Activated B cell treated with CpG ODN at 0.5 μM for 24 hours (primary cell): ENCODE measurements at regions of chr12 and their contacts with region 1.

Region 1: DNA sequence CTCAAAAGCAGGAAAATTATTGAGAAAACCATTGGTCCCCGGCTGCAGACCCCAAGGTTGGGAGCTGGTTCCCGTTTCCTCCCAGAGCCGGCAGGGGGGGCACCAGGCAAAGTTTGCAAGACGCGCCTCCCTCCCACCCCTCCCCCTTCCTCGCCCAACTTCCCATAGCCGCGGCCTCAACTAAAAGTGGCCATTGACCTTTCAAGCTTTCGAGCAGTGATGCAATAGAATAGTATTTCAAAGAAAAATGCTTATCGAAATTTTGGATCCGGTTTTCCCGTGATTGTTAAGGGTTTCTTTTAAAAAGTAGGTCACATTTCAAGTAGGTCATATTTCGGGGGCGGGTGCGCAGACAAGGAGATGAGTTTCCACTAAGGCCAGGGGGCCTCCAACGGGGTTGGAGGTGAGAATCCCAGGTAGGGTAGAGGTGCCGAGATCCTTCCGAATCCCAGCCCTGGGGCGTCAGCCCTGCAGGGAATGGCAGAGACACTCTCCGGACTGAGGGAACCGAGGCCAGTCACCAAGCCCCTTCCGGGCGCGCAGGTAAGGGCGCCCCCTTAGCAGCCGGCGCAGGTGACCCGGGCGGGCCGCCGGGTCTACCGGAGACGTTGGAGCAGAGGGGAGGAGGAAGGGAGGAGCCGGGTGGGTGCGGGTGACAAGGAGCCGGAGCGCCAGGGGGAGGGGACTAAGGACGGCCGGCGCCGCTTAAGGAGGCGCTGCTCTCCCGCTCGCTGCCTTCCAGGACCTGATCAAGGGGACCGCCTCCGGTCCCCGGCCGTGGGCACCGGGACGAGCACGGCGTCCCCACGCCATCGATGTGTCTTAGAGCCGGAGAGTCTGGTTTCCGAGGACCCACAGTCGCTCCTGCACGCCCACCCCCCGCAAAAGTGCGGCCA is 2.6 kb upstream of the SOCS2 start:
- DNase-seq: peak; percentile 60
- ATAC-seq: peak; percentile 42
- H3K4me3 Mint-ChIP-seq: peak overlapping the region; percentile 88
- H3K27ac Mint-ChIP-seq: no peak overlapping the region
- H3K4me1 Mint-ChIP-seq: peaks cover 17% of the 10 kb centered on the region
- H3K27me3 Mint-ChIP-seq: peaks cover 26% of the 10 kb centered on the region
- CTCF ChIP-seq: no peak

Region 2: GRCh38 chr12:92784795-92785562 is 784.9 kb before region 1 on chr12:
- CTCF ChIA-PET with region 1: no interaction called
- POLR2A ChIA-PET with region 1: no interaction called
- intact Hi-C with region 1: loop called (anchors 5 kb)
- DNase-seq: no peak
- ATAC-seq: peak; percentile 98
- H3K4me3 Mint-ChIP-seq: no peak overlapping the region
- H3K27ac Mint-ChIP-seq: no peak overlapping the region
- H3K4me1 Mint-ChIP-seq: no peaks in the 10 kb centered on the region
- H3K27me3 Mint-ChIP-seq: no peaks in the 10 kb centered on the region
- CTCF ChIP-seq: no peak

Region 3: DNA sequence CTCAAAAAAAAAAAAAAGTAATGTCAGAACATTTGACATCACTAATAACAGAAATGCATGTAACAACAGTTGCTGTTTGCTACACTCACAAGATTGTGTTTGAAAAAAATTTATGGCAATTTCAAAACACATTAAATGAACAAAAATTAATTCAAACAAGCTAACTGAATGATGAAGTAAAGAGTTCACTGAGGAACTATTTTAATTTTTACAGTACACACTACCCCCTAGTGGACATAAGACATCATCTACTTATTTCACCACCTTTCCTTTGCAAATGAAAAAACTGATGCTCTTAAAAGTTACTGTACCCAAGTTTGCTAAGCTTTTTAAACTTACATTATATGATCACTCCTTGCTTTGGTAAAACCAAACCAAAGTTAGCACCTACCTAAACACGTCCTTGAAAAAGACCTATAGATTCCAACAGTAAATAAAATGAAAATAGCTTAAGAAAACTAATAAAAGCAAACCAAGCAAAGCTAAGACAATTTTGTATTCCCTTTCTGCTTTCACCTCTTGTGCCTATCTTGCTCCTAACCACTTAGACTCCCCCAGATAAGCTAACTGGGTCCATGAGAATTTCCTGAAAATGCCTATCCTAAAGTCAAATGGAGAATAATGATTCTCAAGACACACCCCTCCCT is 150.4 kb before region 1 on chr12:
- CTCF ChIA-PET with region 1: no interaction called
- POLR2A ChIA-PET with region 1: no interaction called
- intact Hi-C with region 1: loop called (anchors 5 kb)
- DNase-seq: no peak
- ATAC-seq: peak; percentile 56
- H3K4me3 Mint-ChIP-seq: no peak overlapping the region
- H3K27ac Mint-ChIP-seq: peak overlapping the region; percentile 31
- H3K4me1 Mint-ChIP-seq: peaks cover 87% of the 10 kb centered on the region
- H3K27me3 Mint-ChIP-seq: no peaks in the 10 kb centered on the region
- CTCF ChIP-seq: peak; percentile 68

Region 4: GRCh38 chr12:93502802-93503623 is 66.9 kb before region 1 on chr12:
- CTCF ChIA-PET with region 1: interaction called, 13 read pairs
- POLR2A ChIA-PET with region 1: interaction called, 13 read pairs
- intact Hi-C with region 1: loop called (anchors 1 kb)
- DNase-seq: no peak
- ATAC-seq: no peak
- H3K4me3 Mint-ChIP-seq: no peak overlapping the region
- H3K27ac Mint-ChIP-seq: no peak overlapping the region
- H3K4me1 Mint-ChIP-seq: no peaks in the 10 kb centered on the region
- H3K27me3 Mint-ChIP-seq: no peaks in the 10 kb centered on the region
- CTCF ChIP-seq: peak; percentile 78

Region 5: GRCh38 chr12:93550748-93551611 is 18.9 kb before region 1 on chr12:
- CTCF ChIA-PET with region 1: no interaction called
- POLR2A ChIA-PET with region 1: no interaction called
- intact Hi-C with region 1: no loop called
- DNase-seq: no peak
- ATAC-seq: no peak
- H3K4me3 Mint-ChIP-seq: no peak overlapping the region
- H3K27ac Mint-ChIP-seq: no peak overlapping the region
- H3K4me1 Mint-ChIP-seq: peaks cover 6% of the 10 kb centered on the region
- H3K27me3 Mint-ChIP-seq: no peaks in the 10 kb centered on the region
- CTCF ChIP-seq: no peak

Region 6: GRCh38 chr12:93624595-93625294 is 54.8 kb after region 1 on chr12:
- CTCF ChIA-PET with region 1: no interaction called
- POLR2A ChIA-PET with region 1: no interaction called
- intact Hi-C with region 1: loop called (anchors 2 kb)
- DNase-seq: no peak
- ATAC-seq: peak; percentile 83
- H3K4me3 Mint-ChIP-seq: no peak overlapping the region
- H3K27ac Mint-ChIP-seq: no peak overlapping the region
- H3K4me1 Mint-ChIP-seq: peaks cover 5% of the 10 kb centered on the region
- H3K27me3 Mint-ChIP-seq: no peaks in the 10 kb centered on the region
- CTCF ChIP-seq: no peak

Region 7: GRCh38 chr12:93979189-93979588 is 409.3 kb after region 1 on chr12:
- CTCF ChIA-PET with region 1: interaction called, 4 read pairs
- POLR2A ChIA-PET with region 1: no interaction called
- intact Hi-C with region 1: loop called (anchors 1 kb)
- DNase-seq: no peak
- ATAC-seq: no peak
- H3K4me3 Mint-ChIP-seq: no peak overlapping the region
- H3K27ac Mint-ChIP-seq: no peak overlapping the region
- H3K4me1 Mint-ChIP-seq: no peaks in the 10 kb centered on the region
- H3K27me3 Mint-ChIP-seq: peaks cover 6% of the 10 kb centered on the region
- CTCF ChIP-seq: no peak

Region 8: GRCh38 chr12:94459728-94460615 is 890.1 kb after region 1 on chr12 and contains the start of gene CEP83:
- CTCF ChIA-PET with region 1: no interaction called
- POLR2A ChIA-PET with region 1: no interaction called
- intact Hi-C with region 1: loop called (anchors 1 kb)
- DNase-seq: peak; percentile 94
- ATAC-seq: peak; percentile 96
- H3K4me3 Mint-ChIP-seq: peak within 1 kb of the TSS; percentile 91
- H3K27ac Mint-ChIP-seq: peak within 1 kb of the TSS; percentile 88
- H3K4me1 Mint-ChIP-seq: peaks cover 23% of the 10 kb centered on the region
- H3K27me3 Mint-ChIP-seq: no peaks in the 10 kb centered on the region
- CTCF ChIP-seq: no peak
- total RNA-seq, gene CEP83: 25.0 and 36.9 TPM in 2 replicates